ENCODE measurements at regions of chr6 and their contacts with region 1.

Region 1: DNA sequence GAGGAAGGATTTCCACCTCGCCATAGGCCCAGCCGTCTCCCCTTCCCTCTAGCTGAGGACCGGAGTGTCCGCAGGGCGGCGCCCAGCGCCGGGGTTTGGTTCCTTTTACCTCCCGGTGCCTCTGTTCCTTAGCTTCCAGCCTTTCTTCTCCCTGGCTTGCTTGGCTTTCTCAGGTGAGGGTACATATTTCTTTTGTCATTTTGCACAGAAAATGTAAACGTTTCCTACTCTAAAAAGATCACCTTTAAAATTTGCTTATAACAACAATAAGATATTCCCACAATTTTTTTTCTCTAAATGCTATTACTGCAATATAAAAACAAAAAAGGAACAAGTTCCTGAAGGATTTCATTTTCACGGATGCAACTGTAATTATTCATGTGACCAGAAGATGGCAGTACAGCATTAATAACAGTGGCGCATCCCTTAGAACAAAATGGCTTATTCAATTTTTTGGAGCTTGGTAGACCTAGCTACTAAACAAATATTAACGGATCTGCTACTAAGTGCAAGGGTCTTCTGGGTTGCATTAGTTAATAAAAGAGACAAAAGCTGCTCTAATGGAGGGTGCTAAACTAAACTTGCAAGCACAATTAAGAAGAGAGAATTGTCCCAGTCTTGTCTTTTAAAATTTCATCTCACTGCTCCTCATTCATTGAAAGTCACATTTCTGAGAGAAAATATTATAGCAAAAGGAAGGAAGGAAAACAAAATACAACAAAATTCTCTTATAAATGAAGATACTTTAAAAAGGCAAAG is 172.9 kb downstream of the ADGRG6 start:
- DNase-seq: peak; percentile 71
- H3K4me3 ChIP-seq: no peak overlapping the region
- H3K27ac ChIP-seq: peak overlapping the region; percentile 1
- H3K4me1 ChIP-seq: peaks cover 2% of the 10 kb centered on the region
- H3K27me3 ChIP-seq: peaks cover 0 to 2% of the 10 kb centered on the region in 2 experiments
- CTCF ChIP-seq: peak; percentile 41 to 43
- POLR2A ChIP-seq: no peak

Region 2: DNA sequence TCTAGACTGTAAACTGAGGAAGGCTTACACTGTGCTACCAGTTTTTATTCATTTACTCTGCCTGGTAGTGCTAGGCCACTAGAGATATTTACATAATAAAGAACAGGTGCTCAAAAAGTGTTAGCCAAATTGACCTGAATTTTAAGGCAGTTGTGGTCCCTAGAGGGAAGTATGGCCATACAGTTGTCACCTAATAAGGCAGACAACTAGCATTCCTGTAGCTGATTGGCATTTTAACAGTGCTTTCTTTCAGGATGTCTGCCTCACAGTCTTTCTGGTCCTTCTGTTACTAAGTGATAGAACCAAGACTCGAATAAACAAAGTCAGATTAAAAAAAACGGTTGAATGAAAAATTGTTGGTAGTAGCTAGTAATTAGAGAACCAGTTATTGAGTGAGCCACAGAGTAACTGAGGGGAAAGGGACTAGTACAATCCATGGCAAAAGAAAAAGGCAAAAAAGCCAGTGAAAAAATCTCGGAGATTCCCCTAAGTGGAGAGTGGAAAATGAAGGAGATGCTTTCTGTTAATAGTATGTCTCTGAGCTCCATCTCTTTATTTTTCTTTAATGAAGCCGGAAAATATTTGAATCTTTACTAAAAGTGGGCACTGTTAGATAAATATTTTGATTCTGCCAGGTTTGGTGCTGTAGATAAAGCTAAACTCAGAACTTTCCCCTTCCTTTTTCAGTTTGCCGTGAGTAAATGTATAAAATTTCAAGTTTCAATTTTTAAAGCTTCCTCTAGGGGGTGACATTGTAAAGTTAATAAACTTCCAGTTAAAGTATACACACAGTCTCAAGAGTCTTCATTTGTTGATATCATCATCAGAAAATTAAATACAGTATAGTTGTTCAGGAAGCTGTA is 318.6 kb before region 1 on chr6:
- CTCF ChIA-PET with region 1: interaction called, 49 read pairs
- POLR2A ChIA-PET with region 1: no interaction called
- dilution Hi-C with region 1: no loop called
- intact Hi-C with region 1: no loop called
- DNase-seq: peak; percentile 76
- H3K4me3 ChIP-seq: peak overlapping the region in 1 of 3 experiments; percentile 13
- H3K27ac ChIP-seq: peak overlapping the region; percentile 74
- H3K4me1 ChIP-seq: peaks cover 38% of the 10 kb centered on the region
- H3K27me3 ChIP-seq: no peaks in the 10 kb centered on the region
- CTCF ChIP-seq: peak; percentile 7 to 24
- POLR2A ChIP-seq: no peak

Region 3: DNA sequence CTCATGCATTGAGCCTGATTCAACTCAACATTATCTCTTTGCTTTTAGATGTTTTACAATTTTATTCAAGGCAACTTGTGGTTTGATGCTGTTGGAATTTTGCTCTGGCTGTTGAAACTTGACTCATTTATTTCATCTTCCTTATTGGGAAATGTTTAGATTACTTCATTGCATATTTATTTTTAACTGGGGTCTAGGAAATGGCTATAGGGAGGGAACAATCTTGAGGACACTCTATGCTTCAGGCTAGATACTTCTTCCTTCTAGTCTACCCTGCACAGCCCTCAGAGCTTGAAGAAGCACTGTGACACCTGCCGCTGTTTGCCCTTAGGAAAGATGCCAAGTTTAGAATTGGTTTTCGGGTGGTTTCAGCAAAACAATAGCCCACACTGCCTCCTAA is 10.5 kb after region 1 on chr6:
- CTCF ChIA-PET with region 1: interaction called, 24 read pairs
- POLR2A ChIA-PET with region 1: no interaction called
- dilution Hi-C with region 1: no loop called
- intact Hi-C with region 1: no loop called
- DNase-seq: no peak
- H3K4me3 ChIP-seq: no peak overlapping the region
- H3K27ac ChIP-seq: no peak overlapping the region
- H3K4me1 ChIP-seq: no peaks in the 10 kb centered on the region
- H3K27me3 ChIP-seq: peaks cover 9 to 11% of the 10 kb centered on the region in 2 experiments
- CTCF ChIP-seq: no peak
- POLR2A ChIP-seq: no peak

Region 4: DNA sequence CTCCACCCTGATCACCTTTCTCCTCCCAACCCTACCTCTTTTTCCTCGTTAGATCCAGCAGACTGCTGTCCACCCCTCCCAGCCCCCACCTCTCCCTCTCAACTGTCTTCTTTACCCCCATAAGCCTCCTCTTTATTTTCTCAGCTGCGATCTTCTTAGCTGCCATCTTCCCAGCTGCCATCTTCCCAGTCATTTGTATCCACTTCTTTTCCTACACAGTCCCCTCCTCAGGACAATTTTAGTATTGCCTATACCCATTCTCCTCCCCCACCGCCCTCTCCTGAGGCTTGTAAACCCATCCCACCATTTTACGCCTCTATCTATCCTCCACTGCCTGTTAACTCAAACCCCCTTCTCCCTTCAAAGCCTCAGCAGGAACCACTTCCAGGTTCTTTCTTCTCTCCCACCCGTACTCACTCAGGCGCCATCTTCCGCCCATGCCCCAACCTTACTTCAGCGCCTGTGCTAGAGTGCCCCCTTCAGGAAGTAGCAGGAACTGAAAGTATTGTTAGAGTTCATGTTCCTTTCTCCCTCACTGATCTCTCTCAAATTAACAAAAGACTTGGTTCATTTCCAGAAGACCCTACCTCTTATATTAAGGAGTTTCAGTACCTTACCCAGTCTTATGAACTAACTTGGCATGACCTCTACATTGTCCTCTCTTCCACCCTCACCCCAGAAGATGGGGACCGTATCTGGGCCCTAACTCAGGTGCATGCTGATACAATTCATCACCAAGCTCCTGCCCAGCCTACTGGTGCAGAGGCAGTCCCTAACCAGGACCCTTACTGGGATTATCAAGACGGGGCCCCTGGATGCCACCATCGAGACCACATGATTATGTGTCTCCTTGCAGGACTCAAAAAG is 63.1 kb after region 1 on chr6:
- CTCF ChIA-PET with region 1: interaction called, 18 read pairs
- POLR2A ChIA-PET with region 1: no interaction called
- dilution Hi-C with region 1: no loop called
- intact Hi-C with region 1: loop called (anchors 1 kb)
- DNase-seq: peak; percentile 18
- H3K4me3 ChIP-seq: no peak overlapping the region
- H3K27ac ChIP-seq: no peak overlapping the region
- H3K4me1 ChIP-seq: no peaks in the 10 kb centered on the region
- H3K27me3 ChIP-seq: no peaks in the 10 kb centered on the region
- CTCF ChIP-seq: peak; percentile 48 to 53
- POLR2A ChIP-seq: no peak

Region 5: GRCh38 chr6:142679907-142680700 is 205.4 kb after region 1 on chr6:
- CTCF ChIA-PET with region 1: no interaction called
- POLR2A ChIA-PET with region 1: no interaction called
- dilution Hi-C with region 1: no loop called
- intact Hi-C with region 1: no loop called
- DNase-seq: peak; percentile 46
- H3K4me3 ChIP-seq: no peak overlapping the region
- H3K27ac ChIP-seq: no peak overlapping the region
- H3K4me1 ChIP-seq: no peaks in the 10 kb centered on the region
- H3K27me3 ChIP-seq: peaks cover 24 to 26% of the 10 kb centered on the region in 2 experiments
- CTCF ChIP-seq: no peak
- POLR2A ChIP-seq: no peak

Region 6: GRCh38 chr6:143026696-143027449 is 552.2 kb after region 1 on chr6:
- CTCF ChIA-PET with region 1: interaction called, 28 read pairs
- POLR2A ChIA-PET with region 1: no interaction called
- dilution Hi-C with region 1: no loop called
- intact Hi-C with region 1: loop called (anchors 10 kb)
- DNase-seq: peak; percentile 61
- H3K4me3 ChIP-seq: no peak overlapping the region
- H3K27ac ChIP-seq: no peak overlapping the region
- H3K4me1 ChIP-seq: no peaks in the 10 kb centered on the region
- H3K27me3 ChIP-seq: no peaks in the 10 kb centered on the region
- CTCF ChIP-seq: peak; percentile 66 to 72
- POLR2A ChIP-seq: no peak

Region 7: GRCh38 chr6:143337201-143337949 is 862.7 kb after region 1 on chr6:
- CTCF ChIA-PET with region 1: interaction called, 12 read pairs
- POLR2A ChIA-PET with region 1: no interaction called
- dilution Hi-C with region 1: no loop called
- intact Hi-C with region 1: loop called (anchors 5 kb)
- DNase-seq: peak; percentile 31
- H3K4me3 ChIP-seq: no peak overlapping the region
- H3K27ac ChIP-seq: no peak overlapping the region
- H3K4me1 ChIP-seq: no peaks in the 10 kb centered on the region
- H3K27me3 ChIP-seq: no peaks in the 10 kb centered on the region
- CTCF ChIP-seq: peak; percentile 63 to 73
- POLR2A ChIP-seq: no peak

Measured in endothelial cell of umbilical vein (primary cell).